CD8-positive, alpha-beta T cell (primary cell): ENCODE measurements at regions of chr14 and their contacts with region 1.

Region 1: GRCh38 chr14:59189786-59190771 is 1.6 kb downstream of the DAAM1 start:
- DNase-seq: peak; percentile 37 to 87 (median 66)
- ATAC-seq: no peak
- H3K4me3 ChIP-seq: peak overlapping the region; percentile 63 to 94
- H3K4me3 Mint-ChIP-seq: peak overlapping the region; percentile 98
- H3K27ac ChIP-seq: peak overlapping the region; percentile 76 to 87
- H3K27ac Mint-ChIP-seq: peak overlapping the region; percentile 98
- H3K4me1 ChIP-seq: peaks cover 14% of the 10 kb centered on the region
- H3K4me1 Mint-ChIP-seq: peaks cover 17% of the 10 kb centered on the region
- H3K27me3 ChIP-seq: no peaks in the 10 kb centered on the region
- H3K27me3 Mint-ChIP-seq: no peaks in the 10 kb centered on the region
- CTCF ChIP-seq: no peak

Region 2: DNA sequence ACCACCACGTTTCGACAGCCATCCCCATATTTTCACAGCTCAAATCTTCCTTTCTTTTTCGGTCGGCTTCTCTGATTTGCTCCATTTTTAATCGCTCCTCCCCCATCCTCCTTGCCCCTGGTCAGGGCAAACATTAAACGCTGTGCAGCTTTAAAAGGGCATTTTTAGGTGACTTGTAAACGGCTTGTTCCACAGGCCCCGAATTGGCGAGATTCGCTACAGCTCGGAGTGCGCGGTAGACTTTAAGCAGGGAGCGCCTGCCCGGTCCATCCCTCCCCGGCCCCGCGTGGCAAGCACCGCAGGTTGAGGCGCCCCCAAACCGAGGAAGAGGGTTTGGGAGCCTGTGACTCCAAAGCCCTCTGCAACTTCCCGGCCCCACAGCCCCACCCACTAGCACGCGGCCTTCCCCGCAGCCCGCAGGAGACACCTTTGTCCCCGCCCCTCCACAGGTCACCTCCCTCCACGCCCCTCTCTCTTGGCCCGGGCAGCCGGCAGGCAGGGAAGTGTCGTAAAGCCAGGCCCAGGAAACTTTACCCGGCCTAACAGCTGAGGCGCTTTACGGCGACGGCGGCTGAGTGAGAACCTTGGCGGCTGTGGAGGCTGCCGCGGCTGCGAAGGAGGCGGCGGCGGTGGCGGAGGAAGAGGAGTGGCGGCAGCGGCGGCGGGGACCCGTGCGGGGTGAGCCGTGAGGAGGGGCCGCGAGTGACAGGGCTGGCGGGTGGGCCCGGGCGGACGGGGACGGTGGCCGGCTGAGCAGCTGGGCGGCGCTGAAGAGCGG is 1799.9 kb before region 1 on chr14 and contains the start of gene NAA30:
- CTCF ChIA-PET with region 1: no interaction called
- POLR2A ChIA-PET with region 1: interaction called, 3 read pairs
- intact Hi-C with region 1: loop called (anchors 2 kb)
- DNase-seq: peak; percentile 82 to 97 (median 92)
- ATAC-seq: peak; percentile 93
- H3K4me3 ChIP-seq: peak within 1 kb of the TSS; percentile 46 to 83
- H3K4me3 Mint-ChIP-seq: peak within 1 kb of the TSS; percentile 94
- H3K27ac ChIP-seq: peak within 1 kb of the TSS; percentile 48 to 82
- H3K27ac Mint-ChIP-seq: peak within 1 kb of the TSS; percentile 94
- H3K4me1 ChIP-seq: peaks cover 27% of the 10 kb centered on the region
- H3K4me1 Mint-ChIP-seq: peaks cover 42% of the 10 kb centered on the region
- H3K27me3 ChIP-seq: no peaks in the 10 kb centered on the region
- H3K27me3 Mint-ChIP-seq: no peaks in the 10 kb centered on the region
- CTCF ChIP-seq: no peak
- total RNA-seq, gene NAA30: 26.4 to 31.2 TPM

Region 3: DNA sequence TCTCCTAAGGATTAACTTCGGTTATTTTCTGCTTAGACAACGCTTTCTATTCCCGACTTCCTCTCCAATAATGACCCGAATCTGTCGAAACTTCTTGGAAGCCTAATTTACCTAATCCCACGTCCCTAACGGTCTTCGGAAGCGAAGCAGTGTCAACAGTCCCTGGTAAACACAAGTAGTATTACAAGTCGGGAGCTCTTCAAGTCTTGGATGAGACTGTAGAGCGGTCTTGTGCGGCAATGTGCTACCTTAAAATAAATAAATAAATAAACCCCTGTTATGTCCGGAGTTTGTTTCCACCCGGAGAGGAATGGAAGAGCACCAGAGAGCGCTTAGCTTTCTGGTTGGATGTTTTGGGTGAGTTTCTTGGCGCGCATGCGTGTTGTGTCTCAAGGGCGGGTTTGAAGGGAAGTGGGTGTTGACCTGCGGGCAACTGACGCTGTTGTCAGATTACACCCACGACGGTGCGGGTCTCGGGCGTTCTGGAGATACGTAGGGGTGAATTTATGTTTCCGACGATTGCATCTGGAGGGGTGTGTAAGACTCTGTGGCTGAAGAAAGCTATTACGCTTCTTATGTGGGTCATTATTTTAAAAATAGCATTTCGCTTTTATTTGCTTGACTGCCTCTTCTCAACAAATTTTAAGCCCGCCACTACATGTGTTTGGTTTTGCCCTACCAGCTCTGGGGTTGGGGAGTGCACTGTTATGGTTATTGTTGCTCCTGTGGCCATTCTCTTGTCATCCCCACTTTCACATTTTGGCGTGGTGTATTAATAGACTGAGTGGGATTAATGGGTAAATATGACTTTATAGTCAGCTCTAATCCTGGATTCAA is 762.6 kb before region 1 on chr14 and contains the starts of genes KIAA0586 and TIMM9:
- CTCF ChIA-PET with region 1: no interaction called
- POLR2A ChIA-PET with region 1: no interaction called
- intact Hi-C with region 1: loop called (anchors 5 kb)
- DNase-seq: peak; percentile 93 to 99 (median 94)
- ATAC-seq: peak; percentile 91
- H3K4me3 ChIP-seq: peak within 1 kb of the TSS; percentile 91 to 94
- H3K4me3 Mint-ChIP-seq: peak within 1 kb of the TSS; percentile 95
- H3K27ac ChIP-seq: peak within 1 kb of the TSS; percentile 96 to 98
- H3K27ac Mint-ChIP-seq: peak within 1 kb of the TSS; percentile 99
- H3K4me1 ChIP-seq: peaks cover 26% of the 10 kb centered on the region
- H3K4me1 Mint-ChIP-seq: peaks cover 50% of the 10 kb centered on the region
- H3K27me3 ChIP-seq: no peaks in the 10 kb centered on the region
- H3K27me3 Mint-ChIP-seq: no peaks in the 10 kb centered on the region
- CTCF ChIP-seq: no peak
- total RNA-seq, gene KIAA0586: 15.4 to 15.9 TPM
- total RNA-seq, gene TIMM9: 28.1 to 37.5 TPM

Region 4: GRCh38 chr14:59483900-59484638 is 294.0 kb after region 1 on chr14 and contains the starts of genes JKAMP and L3HYPDH:
- CTCF ChIA-PET with region 1: no interaction called
- POLR2A ChIA-PET with region 1: interaction called, 5 read pairs
- intact Hi-C with region 1: loop called (anchors 1 to 2 kb)
- DNase-seq: peak; percentile 93 to 99 (median 97)
- ATAC-seq: peak; percentile 95
- H3K4me3 ChIP-seq: peak within 1 kb of the TSS; percentile 94 to 99
- H3K4me3 Mint-ChIP-seq: peak within 1 kb of the TSS; percentile 96
- H3K27ac ChIP-seq: peak within 1 kb of the TSS; percentile 77 to 89
- H3K27ac Mint-ChIP-seq: peak within 1 kb of the TSS; percentile 88
- H3K4me1 ChIP-seq: peaks cover 46% of the 10 kb centered on the region
- H3K4me1 Mint-ChIP-seq: peaks cover 76% of the 10 kb centered on the region
- H3K27me3 ChIP-seq: no peaks in the 10 kb centered on the region
- H3K27me3 Mint-ChIP-seq: no peaks in the 10 kb centered on the region
- CTCF ChIP-seq: no peak
- total RNA-seq, gene JKAMP: 9.1 to 10.5 TPM
- total RNA-seq, gene L3HYPDH: 8.4 to 8.7 TPM

Region 5: DNA sequence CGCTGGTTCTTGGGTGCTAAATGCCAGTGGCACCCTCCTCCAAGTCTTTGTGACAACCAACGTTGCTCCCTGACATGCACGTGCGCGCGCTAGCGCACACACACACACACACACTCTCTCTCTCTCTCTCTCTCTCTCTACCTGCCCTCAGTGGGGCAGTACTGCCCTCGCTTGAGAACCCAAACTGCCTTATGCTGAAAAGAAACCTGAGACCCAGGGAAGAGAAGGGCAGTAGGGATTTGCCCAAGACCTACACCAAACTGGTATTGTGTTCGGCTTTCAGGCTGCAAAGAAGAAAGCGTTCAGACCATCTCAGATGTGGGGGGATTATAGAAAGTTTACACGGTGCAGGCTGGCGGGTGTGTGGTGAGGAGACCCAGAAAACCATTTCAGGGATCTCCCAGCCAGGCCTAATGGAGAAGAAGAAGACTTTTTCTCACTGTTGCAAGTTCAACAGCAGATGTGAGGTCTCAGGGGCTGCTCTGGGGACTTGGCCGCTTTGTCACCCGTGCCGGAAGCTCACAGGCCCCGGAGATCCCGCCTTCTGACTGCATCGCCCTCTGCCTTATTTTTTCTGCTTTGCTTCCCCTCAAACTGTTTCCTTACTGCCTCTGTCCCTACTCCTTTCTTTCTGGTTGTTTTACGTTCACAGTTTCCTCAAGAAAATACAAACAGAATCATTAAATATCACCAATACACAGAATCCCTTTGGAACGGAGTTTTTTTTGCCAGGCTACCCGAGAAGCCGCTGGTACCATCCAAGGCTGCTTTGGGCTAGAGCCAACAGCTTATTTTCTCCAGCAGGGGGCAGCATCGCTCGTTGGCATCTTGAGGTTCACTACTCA is 1141.3 kb after region 1 on chr14:
- CTCF ChIA-PET with region 1: no interaction called
- POLR2A ChIA-PET with region 1: no interaction called
- intact Hi-C with region 1: loop called (anchors 5 to 10 kb)
- DNase-seq: peak; percentile 51 to 86 (median 80)
- ATAC-seq: peak; percentile 80
- H3K4me3 ChIP-seq: peak overlapping the region; percentile 52 to 55
- H3K4me3 Mint-ChIP-seq: peak overlapping the region; percentile 98
- H3K27ac ChIP-seq: peak overlapping the region; percentile 36 to 47
- H3K27ac Mint-ChIP-seq: peak overlapping the region; percentile 94
- H3K4me1 ChIP-seq: peaks cover 9% of the 10 kb centered on the region
- H3K4me1 Mint-ChIP-seq: peaks cover 33% of the 10 kb centered on the region
- H3K27me3 ChIP-seq: no peaks in the 10 kb centered on the region
- H3K27me3 Mint-ChIP-seq: peaks cover 30% of the 10 kb centered on the region
- CTCF ChIP-seq: peak; percentile 87